Common myeloid progenitor, CD34-positive (primary cell): ENCODE measurements at regions of chr1 and their contacts with region 1.

Region 1: DNA sequence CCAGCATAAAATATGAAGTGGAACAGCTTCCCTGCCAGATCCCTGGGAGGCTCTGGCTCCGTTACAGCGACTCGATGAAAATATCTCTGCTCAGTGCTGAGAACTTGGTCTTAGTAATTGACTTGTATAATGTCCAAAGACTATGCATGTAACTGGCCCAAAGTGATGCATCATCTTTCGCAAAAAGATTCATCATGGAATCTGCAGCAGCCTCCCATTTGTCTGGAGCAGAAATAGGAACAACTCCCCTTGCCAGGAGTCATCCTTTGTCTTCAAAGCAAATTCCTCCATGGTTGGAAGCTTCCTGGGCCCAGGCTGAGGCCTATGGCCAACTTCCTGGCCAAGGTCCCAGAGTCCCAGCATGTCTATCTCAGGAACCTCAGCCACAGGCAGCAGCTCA is 16.9 kb upstream of the SLC6A17 start:
- DNase-seq: no peak
- H3K4me3 ChIP-seq: no peak overlapping the region
- H3K27ac ChIP-seq: no peak overlapping the region
- H3K4me1 ChIP-seq: peaks cover 0 to 14% (median 9%) of the 10 kb centered on the region in 4 experiments
- H3K27me3 ChIP-seq: peaks cover 2 to 66% (median 28%) of the 10 kb centered on the region in 5 experiments

Region 2: DNA sequence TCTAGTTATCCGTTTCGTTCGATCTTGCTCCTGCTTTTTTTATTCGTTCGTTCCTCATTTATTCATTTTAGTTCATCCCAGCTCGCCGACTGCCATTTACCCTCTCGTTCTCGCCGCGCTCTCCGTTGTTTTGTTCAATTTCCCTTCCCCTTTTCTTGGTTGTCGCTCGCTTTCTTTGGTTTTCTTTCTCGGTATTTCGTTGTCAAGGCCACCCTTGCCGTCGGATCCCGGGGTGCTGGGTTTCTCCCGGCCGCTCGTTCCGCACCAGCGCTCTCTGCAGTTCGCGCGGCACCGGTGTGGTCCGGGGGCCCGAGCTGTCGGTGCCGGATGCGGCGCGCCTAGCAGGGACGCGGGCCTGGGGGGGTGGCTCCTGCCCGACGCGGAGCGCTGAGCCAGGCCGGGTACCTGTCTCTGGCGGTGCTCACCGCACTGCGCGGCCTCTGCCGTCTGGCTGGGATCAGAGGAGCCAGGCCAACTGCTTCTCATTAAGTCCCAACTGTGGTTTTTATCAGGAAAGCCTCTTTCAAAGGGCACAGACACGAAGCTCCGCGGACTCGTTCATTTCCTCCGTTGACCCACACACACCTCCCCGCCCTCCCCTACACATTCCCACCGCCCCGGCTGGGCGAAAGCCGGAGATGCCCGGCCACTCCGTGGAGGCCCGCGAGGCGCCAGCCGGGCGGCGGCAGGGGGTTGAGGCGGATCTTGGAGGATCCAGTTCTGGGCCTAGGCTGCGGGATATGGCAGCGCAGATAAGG is 64.6 kb before region 1 on chr1:
- CTCF ChIA-PET with region 1: no interaction called
- POLR2A ChIA-PET with region 1: no interaction called
- DNase-seq: peak; percentile 22 to 59 (median 56)
- H3K4me3 ChIP-seq: peak overlapping the region in 4 of 7 experiments; percentile 4 to 42 (median 27)
- H3K27ac ChIP-seq: no peak overlapping the region
- H3K4me1 ChIP-seq: peaks cover 0 to 36% (median 22%) of the 10 kb centered on the region in 4 experiments
- H3K27me3 ChIP-seq: peaks cover 8 to 89% (median 56%) of the 10 kb centered on the region in 5 experiments

Region 3: DNA sequence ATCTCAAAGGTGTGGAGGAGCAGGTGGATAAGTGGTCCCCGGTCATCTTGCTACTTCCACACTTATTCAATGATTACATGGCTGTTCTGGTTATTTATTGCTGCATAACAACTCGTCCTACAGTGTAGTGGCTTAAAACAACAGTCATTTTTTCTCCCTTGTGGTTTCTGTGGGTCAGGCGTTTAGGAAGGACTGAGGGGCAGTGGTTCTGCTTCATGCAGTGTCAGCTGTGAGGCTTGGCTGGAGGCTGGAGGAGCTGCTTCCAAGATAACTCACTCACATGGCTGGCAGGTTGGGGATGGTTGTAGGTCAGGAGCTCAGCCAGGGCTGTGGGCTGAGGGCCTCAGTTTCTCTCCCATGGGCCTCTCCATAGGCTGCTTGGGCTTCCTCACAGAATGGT is 10.9 kb after region 1 on chr1:
- CTCF ChIA-PET with region 1: interaction called, 11 read pairs
- POLR2A ChIA-PET with region 1: no interaction called
- DNase-seq: peak in 2 of 3 donors; percentile 15 to 27
- H3K4me3 ChIP-seq: no peak overlapping the region
- H3K27ac ChIP-seq: no peak overlapping the region
- H3K4me1 ChIP-seq: no peaks in the 10 kb centered on the region
- H3K27me3 ChIP-seq: peaks cover 2 to 71% (median 40%) of the 10 kb centered on the region in 5 experiments